GM10248 (cell line): ENCODE measurements at regions of chr20 and their contacts with region 1.

Region 1: GRCh38 chr20:4082406-4083097 is 67.2 kb upstream of the RNF24 start:
- DNase-seq: no peak
- CTCF ChIP-seq: no peak

Region 2: GRCh38 chr20:3679749-3680700 is 402.5 kb before region 1 on chr20:
- CTCF ChIA-PET with region 1: interaction called, 11 read pairs
- POLR2A ChIA-PET with region 1: no interaction called
- DNase-seq: no peak
- CTCF ChIP-seq: no peak

Region 3: GRCh38 chr20:4014031-4014474 is 68.5 kb before region 1 on chr20:
- CTCF ChIA-PET with region 1: interaction called, 14 read pairs
- POLR2A ChIA-PET with region 1: no interaction called
- DNase-seq: peak; percentile 43
- CTCF ChIP-seq: peak; percentile 49

Region 4: DNA sequence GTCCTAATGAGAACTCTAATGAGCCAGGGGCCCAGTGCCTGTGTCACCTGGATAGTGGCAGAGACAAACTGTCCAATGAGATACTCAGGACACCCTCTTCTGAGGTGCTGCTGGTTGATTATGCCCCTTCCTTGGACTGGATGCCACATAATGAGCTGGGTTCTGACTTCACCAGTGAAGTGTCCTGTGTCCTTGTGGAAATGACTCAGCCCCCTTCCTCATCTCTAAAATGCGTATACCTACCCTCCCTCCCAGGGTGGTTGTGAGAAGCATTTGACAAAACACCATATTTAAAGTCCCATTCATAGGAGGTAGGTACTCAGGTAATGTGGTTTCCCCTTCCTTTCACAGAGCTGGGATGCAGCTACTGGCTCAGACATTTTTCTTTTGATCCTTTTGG is 38.8 kb before region 1 on chr20:
- CTCF ChIA-PET with region 1: interaction called, 10 read pairs
- POLR2A ChIA-PET with region 1: no interaction called
- DNase-seq: no peak
- CTCF ChIP-seq: no peak

Region 5: DNA sequence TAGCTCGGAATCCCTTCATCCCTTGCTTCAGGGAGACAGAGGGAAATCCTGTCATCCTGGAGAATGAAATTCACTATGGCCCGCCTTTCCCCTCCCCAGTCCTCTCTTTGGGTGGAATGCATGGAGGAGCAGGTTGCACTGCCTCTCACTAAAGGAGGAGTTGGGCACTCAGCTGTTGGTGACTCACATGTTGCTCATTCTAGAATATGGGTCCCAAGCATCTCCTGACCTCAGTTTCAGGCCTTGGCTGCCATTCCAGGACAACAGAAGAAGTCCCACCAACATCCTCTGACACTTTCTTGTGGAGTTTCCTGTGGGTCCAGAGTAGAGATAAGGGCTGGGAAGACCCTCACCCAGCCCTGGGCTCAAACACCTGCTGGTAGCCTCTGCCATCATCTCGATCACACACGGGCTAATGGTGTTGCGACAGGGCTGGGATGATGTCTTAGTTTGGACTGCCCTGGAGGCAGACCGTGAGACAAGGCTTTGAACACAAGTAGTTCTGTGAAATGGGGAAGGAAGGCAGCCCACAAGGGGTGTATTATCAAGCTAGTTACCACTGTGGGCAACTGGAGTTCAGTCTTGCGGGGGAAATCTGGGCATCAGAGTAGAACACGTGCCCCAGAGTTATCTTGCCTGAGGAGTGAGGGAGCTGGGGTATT is 14.8 kb before region 1 on chr20:
- CTCF ChIA-PET with region 1: interaction called, 107 read pairs
- POLR2A ChIA-PET with region 1: interaction called, 3 read pairs
- DNase-seq: no peak
- CTCF ChIP-seq: no peak